Activated CD8-positive, alpha-beta T cell treated with anti-CD3 and anti-CD28 coated beads, Interleukin-2, amount 10 ng/mL, durations not matched to agents 7 days and 5 days (primary cell): ENCODE measurements at regions of chr2 and their contacts with region 1.

Region 1: DNA sequence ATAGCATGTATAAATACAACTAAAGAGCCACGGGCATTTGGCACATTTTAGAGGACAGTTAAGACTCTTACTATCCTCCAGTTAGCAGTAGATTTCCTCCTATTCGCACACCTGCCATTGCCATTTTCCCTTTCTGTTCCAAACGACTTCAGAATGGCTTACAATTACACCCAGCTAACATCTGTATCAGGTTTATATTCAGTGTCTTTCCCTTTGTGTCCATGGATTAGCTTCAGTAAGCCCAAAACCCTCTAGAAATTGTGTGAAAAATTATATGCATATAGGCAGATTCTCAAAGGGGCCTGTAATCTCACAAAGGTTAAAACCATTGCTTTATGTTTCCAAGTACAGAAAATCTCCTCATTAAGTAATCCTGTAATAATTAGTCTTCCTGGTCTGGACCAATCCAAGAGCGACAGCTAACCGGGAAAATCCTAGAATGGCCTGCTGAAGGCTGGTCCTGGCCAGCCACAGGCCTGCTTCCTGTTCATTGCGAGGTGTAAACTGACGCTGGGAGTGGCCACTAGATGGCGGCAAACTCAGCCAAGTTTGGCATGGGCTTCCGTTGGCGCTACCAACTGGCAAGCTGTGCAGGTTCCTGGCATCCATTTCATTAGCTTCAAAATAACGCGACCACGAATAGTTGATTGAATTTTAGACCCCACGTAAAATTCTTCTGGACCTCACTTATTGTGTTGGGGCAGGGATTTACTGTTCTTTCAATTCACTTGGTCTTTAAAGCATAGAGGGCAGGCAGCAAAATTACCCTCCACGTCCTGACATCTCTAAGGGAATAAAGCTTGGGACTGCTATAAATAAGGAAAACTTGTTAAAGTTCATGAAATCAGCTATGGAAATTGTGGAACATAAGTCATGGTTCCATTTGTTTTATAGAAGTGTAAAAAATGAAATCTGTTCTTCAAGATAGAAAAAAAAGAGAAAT is 17.1 kb downstream of the ARHGAP25 start:
- DNase-seq: peak; percentile 95
- ATAC-seq: peak; percentile 98
- H3K4me3 Mint-ChIP-seq: peak overlapping the region; percentile 35
- H3K27ac Mint-ChIP-seq: peak overlapping the region; percentile 78
- H3K4me1 Mint-ChIP-seq: peaks cover 87% of the 10 kb centered on the region
- H3K27me3 Mint-ChIP-seq: no peaks in the 10 kb centered on the region

Region 2: GRCh38 chr2:68669651-68670050 is 82.0 kb before region 1 on chr2:
- CTCF ChIA-PET with region 1: no interaction called
- POLR2A ChIA-PET with region 1: no interaction called
- DNase-seq: no peak
- ATAC-seq: no peak
- H3K4me3 Mint-ChIP-seq: no peak overlapping the region
- H3K27ac Mint-ChIP-seq: no peak overlapping the region
- H3K4me1 Mint-ChIP-seq: peaks cover 8% of the 10 kb centered on the region
- H3K27me3 Mint-ChIP-seq: peaks cover 3% of the 10 kb centered on the region

Region 3: GRCh38 chr2:68715353-68716041 is 36.2 kb before region 1 on chr2:
- CTCF ChIA-PET with region 1: interaction called, 449 read pairs
- POLR2A ChIA-PET with region 1: no interaction called
- DNase-seq: peak; percentile 39
- ATAC-seq: no peak
- H3K4me3 Mint-ChIP-seq: no peak overlapping the region
- H3K27ac Mint-ChIP-seq: peak overlapping the region; percentile 85
- H3K4me1 Mint-ChIP-seq: peaks cover 82% of the 10 kb centered on the region
- H3K27me3 Mint-ChIP-seq: peaks cover 3% of the 10 kb centered on the region

Region 4: DNA sequence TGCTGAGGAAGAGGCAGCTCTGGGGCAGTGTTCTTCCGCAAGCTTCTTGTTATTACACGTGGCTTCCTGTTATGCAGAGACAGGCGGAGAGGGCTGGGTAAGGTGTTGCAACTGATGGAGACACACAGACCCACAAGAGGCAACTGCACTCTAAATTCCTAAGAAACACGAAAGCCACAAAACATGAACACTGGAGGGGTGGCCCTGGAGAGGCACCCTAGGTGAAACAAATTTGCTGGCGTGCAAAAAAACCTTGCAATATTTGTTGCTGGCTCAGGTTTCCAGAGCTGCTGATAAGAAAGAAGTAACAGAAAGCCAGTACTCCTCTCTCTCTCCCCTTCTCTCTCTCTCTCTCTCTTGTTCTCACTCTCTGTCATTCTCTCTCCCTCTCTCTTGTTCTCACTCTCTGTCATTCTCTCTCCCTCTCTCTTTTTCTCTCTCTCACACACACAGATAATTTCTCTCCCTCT is 14.7 kb after region 1 on chr2:
- CTCF ChIA-PET with region 1: interaction called, 448 read pairs
- POLR2A ChIA-PET with region 1: interaction called, 27 read pairs
- DNase-seq: peak; percentile 82
- ATAC-seq: peak; percentile 79
- H3K4me3 Mint-ChIP-seq: peak overlapping the region; percentile 83
- H3K27ac Mint-ChIP-seq: peak overlapping the region; percentile 97
- H3K4me1 Mint-ChIP-seq: peaks cover 91% of the 10 kb centered on the region
- H3K27me3 Mint-ChIP-seq: no peaks in the 10 kb centered on the region

Region 5: GRCh38 chr2:68811364-68811763 is 59.7 kb after region 1 on chr2:
- CTCF ChIA-PET with region 1: interaction called, 16 read pairs
- POLR2A ChIA-PET with region 1: interaction called, 3 read pairs
- DNase-seq: peak; percentile 16
- ATAC-seq: no peak
- H3K4me3 Mint-ChIP-seq: no peak overlapping the region
- H3K27ac Mint-ChIP-seq: peak overlapping the region; percentile 8
- H3K4me1 Mint-ChIP-seq: peaks cover 24% of the 10 kb centered on the region
- H3K27me3 Mint-ChIP-seq: no peaks in the 10 kb centered on the region

Region 6: GRCh38 chr2:68837164-68837860 is 85.6 kb after region 1 on chr2:
- CTCF ChIA-PET with region 1: interaction called, 59 read pairs
- POLR2A ChIA-PET with region 1: no interaction called
- DNase-seq: peak; percentile 80
- ATAC-seq: peak; percentile 82
- H3K4me3 Mint-ChIP-seq: no peak overlapping the region
- H3K27ac Mint-ChIP-seq: no peak overlapping the region
- H3K4me1 Mint-ChIP-seq: peaks cover 44% of the 10 kb centered on the region
- H3K27me3 Mint-ChIP-seq: no peaks in the 10 kb centered on the region

Region 7: DNA sequence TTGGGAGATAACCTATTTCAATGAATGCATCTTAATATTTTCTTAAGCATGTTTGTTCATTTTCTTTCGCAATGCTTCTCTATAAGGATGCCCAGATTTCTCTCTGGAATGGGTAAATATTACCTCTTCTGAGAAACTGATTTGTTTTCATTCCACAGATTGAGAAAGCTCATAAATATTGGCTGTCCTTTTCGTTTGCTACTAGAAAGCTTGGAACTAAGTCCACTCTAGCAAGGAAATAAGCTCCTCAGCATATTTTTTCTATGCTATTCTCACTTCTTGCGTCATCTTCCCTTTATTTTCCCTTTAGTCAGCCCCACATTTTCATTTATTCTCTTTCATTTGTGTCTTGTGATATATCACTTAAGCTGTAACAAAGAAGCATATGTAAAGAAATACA is 337.6 kb after region 1 on chr2:
- CTCF ChIA-PET with region 1: no interaction called
- POLR2A ChIA-PET with region 1: no interaction called
- DNase-seq: no peak
- ATAC-seq: no peak
- H3K4me3 Mint-ChIP-seq: no peak overlapping the region
- H3K27ac Mint-ChIP-seq: no peak overlapping the region
- H3K4me1 Mint-ChIP-seq: no peaks in the 10 kb centered on the region
- H3K27me3 Mint-ChIP-seq: peaks cover 25% of the 10 kb centered on the region